ENCODE measurements at regions of chr17 and their contacts with region 1.

Region 1: GRCh38 chr17:76452660-76453430 is at the start of gene UBE2O:
- DNase-seq: peak; percentile 93 to 95 (median 94)
- H3K4me3 ChIP-seq: peak within 1 kb of the TSS; percentile 52 to 58
- H3K4me3 Mint-ChIP-seq: peak within 1 kb of the TSS; percentile 83 to 92 (median 87)
- H3K27ac ChIP-seq: peak within 1 kb of the TSS; percentile 72
- H3K27ac Mint-ChIP-seq: peak within 1 kb of the TSS; percentile 77 to 99 (median 96)
- H3K4me1 ChIP-seq: peaks cover 20% of the 10 kb centered on the region
- H3K4me1 Mint-ChIP-seq: peaks cover 17 to 44% (median 29%) of the 10 kb centered on the region in 4 donors
- H3K27me3 ChIP-seq: no peaks in the 10 kb centered on the region
- H3K27me3 Mint-ChIP-seq: no peaks in the 10 kb centered on the region
- total RNA-seq, gene UBE2O: 42.5 to 43.7 TPM

Region 2: DNA sequence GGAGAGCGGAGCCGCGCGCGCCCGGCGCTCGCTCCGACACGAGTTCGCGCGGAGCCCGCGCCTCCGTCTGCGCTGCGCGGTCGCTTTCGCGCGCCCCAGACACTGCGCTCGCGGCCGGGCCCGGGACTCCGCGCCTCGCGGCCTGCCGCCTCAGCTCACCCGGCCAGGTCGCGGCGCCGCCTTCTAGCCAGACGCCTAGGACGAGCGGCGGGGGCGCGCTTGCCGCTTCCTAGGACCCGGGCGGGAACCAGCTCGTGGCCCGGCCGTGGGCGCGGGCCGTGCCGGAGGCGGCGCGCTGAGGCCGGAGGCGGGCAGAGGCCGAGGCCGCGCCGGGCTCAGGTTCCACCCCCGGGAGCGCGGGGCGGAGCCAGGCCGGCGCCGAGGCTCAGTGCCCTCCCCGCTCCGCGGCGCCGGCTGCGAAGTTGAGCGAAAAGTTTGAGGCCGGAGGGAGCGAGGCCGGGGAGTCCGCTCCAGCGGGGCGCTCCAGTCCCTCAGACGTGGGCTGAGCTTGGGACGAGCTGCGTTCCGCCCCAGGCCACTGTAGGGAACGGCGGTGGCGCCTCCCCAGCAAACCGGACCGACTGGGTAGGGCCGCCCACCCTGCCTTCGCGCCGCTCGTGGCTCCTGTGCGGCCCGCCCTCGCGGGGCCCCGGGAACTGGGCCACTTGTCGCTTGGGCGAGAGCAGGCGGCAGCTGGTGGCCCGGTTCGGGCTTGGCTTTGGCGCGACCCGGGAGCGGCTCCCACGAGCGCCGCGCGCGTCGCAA is 68.4 kb before region 1 on chr17 and contains the start of gene SPHK1:
- CTCF ChIA-PET with region 1: interaction called, 4 read pairs
- POLR2A ChIA-PET with region 1: no interaction called
- intact Hi-C with region 1: loop called (anchors 2 kb)
- DNase-seq: peak in 4 of 5 donors; percentile 38 to 60 (median 50)
- H3K4me3 ChIP-seq: peak within 1 kb of the TSS; percentile 42 to 64
- H3K4me3 Mint-ChIP-seq: peak within 1 kb of the TSS; percentile 86 to 95 (median 90)
- H3K27ac ChIP-seq: no peak within 1 kb of the TSS
- H3K27ac Mint-ChIP-seq: peak within 1 kb of the TSS; percentile 39 to 92 (median 72)
- H3K4me1 ChIP-seq: peaks cover 20% of the 10 kb centered on the region
- H3K4me1 Mint-ChIP-seq: peaks cover 0 to 6% (median 4%) of the 10 kb centered on the region in 4 donors
- H3K27me3 ChIP-seq: no peaks in the 10 kb centered on the region
- H3K27me3 Mint-ChIP-seq: no peaks in the 10 kb centered on the region
- total RNA-seq, gene SPHK1: 0.67 to 0.70 TPM

Region 3: GRCh38 chr17:76492989-76493501 is 40.2 kb after region 1 on chr17:
- CTCF ChIA-PET with region 1: no interaction called
- POLR2A ChIA-PET with region 1: interaction called, 10 read pairs
- intact Hi-C with region 1: no loop called
- DNase-seq: peak; percentile 15 to 53 (median 37)
- H3K4me3 ChIP-seq: peak overlapping the region; percentile 34 to 46
- H3K4me3 Mint-ChIP-seq: peak overlapping the region; percentile 70 to 87 (median 84)
- H3K27ac ChIP-seq: peak overlapping the region; percentile 64
- H3K27ac Mint-ChIP-seq: peak overlapping the region; percentile 74 to 97 (median 94)
- H3K4me1 ChIP-seq: peaks cover 46% of the 10 kb centered on the region
- H3K4me1 Mint-ChIP-seq: peaks cover 17 to 64% (median 42%) of the 10 kb centered on the region in 4 donors
- H3K27me3 ChIP-seq: no peaks in the 10 kb centered on the region
- H3K27me3 Mint-ChIP-seq: no peaks in the 10 kb centered on the region

Region 4: GRCh38 chr17:76501018-76501826 is 48.4 kb after region 1 on chr17 and contains the start of gene RHBDF2:
- CTCF ChIA-PET with region 1: interaction called, 16 read pairs
- POLR2A ChIA-PET with region 1: interaction called, 8 read pairs
- intact Hi-C with region 1: loop called (anchors 1 kb)
- DNase-seq: peak; percentile 92 to 98 (median 95)
- H3K4me3 ChIP-seq: peak within 1 kb of the TSS; percentile 61 to 83
- H3K4me3 Mint-ChIP-seq: peak within 1 kb of the TSS; percentile 86 to 91 (median 89)
- H3K27ac ChIP-seq: peak within 1 kb of the TSS; percentile 69
- H3K27ac Mint-ChIP-seq: peak within 1 kb of the TSS; percentile 85 to 100 (median 98)
- H3K4me1 ChIP-seq: peaks cover 41% of the 10 kb centered on the region
- H3K4me1 Mint-ChIP-seq: peaks cover 15 to 56% (median 40%) of the 10 kb centered on the region in 4 donors
- H3K27me3 ChIP-seq: no peaks in the 10 kb centered on the region
- H3K27me3 Mint-ChIP-seq: no peaks in the 10 kb centered on the region
- total RNA-seq, gene RHBDF2: 50.0 to 62.2 TPM

Region 5: GRCh38 chr17:76515274-76515949 is 62.6 kb after region 1 on chr17:
- CTCF ChIA-PET with region 1: interaction called, 5 read pairs
- POLR2A ChIA-PET with region 1: interaction called, 14 read pairs
- intact Hi-C with region 1: loop called (anchors 2 kb)
- DNase-seq: peak; percentile 91 to 95 (median 94)
- H3K4me3 ChIP-seq: peak overlapping the region; percentile 20 to 25
- H3K4me3 Mint-ChIP-seq: peak overlapping the region; percentile 69 to 86 (median 80)
- H3K27ac ChIP-seq: peak overlapping the region; percentile 76
- H3K27ac Mint-ChIP-seq: peak overlapping the region; percentile 94 to 100 (median 99)
- H3K4me1 ChIP-seq: peaks cover 82% of the 10 kb centered on the region
- H3K4me1 Mint-ChIP-seq: peaks cover 31 to 85% (median 51%) of the 10 kb centered on the region in 4 donors
- H3K27me3 ChIP-seq: no peaks in the 10 kb centered on the region
- H3K27me3 Mint-ChIP-seq: no peaks in the 10 kb centered on the region

Region 6: GRCh38 chr17:76671123-76671911 is 218.5 kb after region 1 on chr17:
- CTCF ChIA-PET with region 1: no interaction called
- POLR2A ChIA-PET with region 1: interaction called, 5 read pairs
- intact Hi-C with region 1: loop called (anchors 10 kb)
- DNase-seq: peak; percentile 98 to 99 (median 99)
- H3K4me3 ChIP-seq: peak overlapping the region; percentile 75 to 83
- H3K4me3 Mint-ChIP-seq: peak overlapping the region; percentile 87 to 97 (median 92)
- H3K27ac ChIP-seq: peak overlapping the region; percentile 72
- H3K27ac Mint-ChIP-seq: peak overlapping the region; percentile 91 to 98 (median 97)
- H3K4me1 ChIP-seq: peaks cover 34% of the 10 kb centered on the region
- H3K4me1 Mint-ChIP-seq: peaks cover 22 to 32% (median 29%) of the 10 kb centered on the region in 4 donors
- H3K27me3 ChIP-seq: no peaks in the 10 kb centered on the region
- H3K27me3 Mint-ChIP-seq: no peaks in the 10 kb centered on the region